A673 (cell line): ENCODE measurements at regions of chr1 and their contacts with region 1.

Region 1: GRCh38 chr1:185853739-185854138 is 119.5 kb downstream of the HMCN1 start:
- DNase-seq: no peak
- H3K4me3 ChIP-seq: no peak overlapping the region
- H3K27ac ChIP-seq: no peak overlapping the region
- H3K4me1 ChIP-seq: peaks cover 77% of the 10 kb centered on the region
- H3K27me3 ChIP-seq: no peaks in the 10 kb centered on the region
- CTCF ChIP-seq: no peak

Region 2: GRCh38 chr1:185834371-185834905 is 19.3 kb before region 1 on chr1:
- CTCF ChIA-PET with region 1: interaction called, 18 read pairs
- POLR2A ChIA-PET with region 1: no interaction called
- intact Hi-C with region 1: no loop called
- DNase-seq: peak; percentile 84
- H3K4me3 ChIP-seq: no peak overlapping the region
- H3K27ac ChIP-seq: peak overlapping the region; percentile 61
- H3K4me1 ChIP-seq: peaks cover 63% of the 10 kb centered on the region
- H3K27me3 ChIP-seq: no peaks in the 10 kb centered on the region
- CTCF ChIP-seq: no peak

Region 3: DNA sequence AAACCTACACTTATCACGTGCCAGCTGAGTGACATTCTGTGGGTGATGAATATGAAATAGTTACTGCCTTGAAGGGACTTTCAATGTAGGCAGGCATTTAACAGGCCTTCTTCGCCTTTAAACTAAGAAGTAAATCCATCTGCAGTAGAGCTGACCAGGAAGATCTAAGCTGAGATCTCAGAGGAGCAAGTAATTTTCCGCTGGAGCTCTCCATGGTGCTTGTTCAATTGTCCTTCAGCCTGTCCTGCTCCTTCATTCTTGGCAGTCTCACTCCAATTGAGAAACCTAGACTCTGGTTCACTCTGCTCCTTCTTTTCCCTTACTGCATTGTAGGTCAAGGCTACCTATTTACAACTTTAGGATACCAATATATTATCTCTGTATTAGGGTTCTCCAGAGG is 63.9 kb after region 1 on chr1:
- CTCF ChIA-PET with region 1: no interaction called
- POLR2A ChIA-PET with region 1: no interaction called
- intact Hi-C with region 1: loop called (anchors 10 kb)
- DNase-seq: peak; percentile 43
- H3K4me3 ChIP-seq: no peak overlapping the region
- H3K27ac ChIP-seq: no peak overlapping the region
- H3K4me1 ChIP-seq: peaks cover 23% of the 10 kb centered on the region
- H3K27me3 ChIP-seq: no peaks in the 10 kb centered on the region
- CTCF ChIP-seq: no peak

Region 4: GRCh38 chr1:186112280-186112679 is 258.5 kb after region 1 on chr1:
- CTCF ChIA-PET with region 1: no interaction called
- POLR2A ChIA-PET with region 1: no interaction called
- intact Hi-C with region 1: no loop called
- DNase-seq: no peak
- H3K4me3 ChIP-seq: no peak overlapping the region
- H3K27ac ChIP-seq: no peak overlapping the region
- H3K4me1 ChIP-seq: no peaks in the 10 kb centered on the region
- H3K27me3 ChIP-seq: no peaks in the 10 kb centered on the region
- CTCF ChIP-seq: no peak